ENCODE measurements at regions of chrX and their contacts with region 1.

Region 1: GRCh38 chrX:148310426-148311165 is 189.8 kb upstream of the AFF2 start:
- DNase-seq: peak in 8 of 9 donors; percentile 28 to 86 (median 76)
- ATAC-seq: peak; percentile 93
- H3K4me3 ChIP-seq: no peak overlapping the region
- H3K4me3 Mint-ChIP-seq: peak overlapping the region; percentile 48 to 83 (median 76)
- H3K27ac ChIP-seq: no peak overlapping the region
- H3K27ac Mint-ChIP-seq: peak overlapping the region; percentile 64 to 94 (median 85)
- H3K4me1 ChIP-seq: peaks cover 20 to 23% of the 10 kb centered on the region in 2 donors
- H3K4me1 Mint-ChIP-seq: peaks cover 18 to 51% (median 45%) of the 10 kb centered on the region in 7 donors
- H3K27me3 ChIP-seq: no peaks in the 10 kb centered on the region
- H3K27me3 Mint-ChIP-seq: no peaks in the 10 kb centered on the region

Region 2: DNA sequence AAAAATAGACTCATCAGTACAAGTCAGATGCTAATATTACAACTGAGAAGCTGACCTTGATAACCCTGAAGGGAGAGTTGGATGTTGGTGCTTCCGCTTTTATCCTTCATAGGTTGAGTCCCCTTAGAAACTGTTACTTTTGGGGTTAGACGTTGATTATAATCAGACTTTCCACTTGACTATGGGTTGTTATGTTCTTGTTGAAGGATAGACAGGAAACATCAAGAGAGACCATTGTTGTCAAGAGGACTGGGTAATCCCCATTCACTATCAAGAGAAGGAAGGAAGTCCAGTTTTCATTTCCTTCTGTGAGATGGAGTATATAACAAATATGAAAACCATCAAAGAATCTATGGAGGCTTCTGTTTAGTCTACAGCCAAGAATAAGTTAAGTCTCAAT is 40.1 kb before region 1 on chrX:
- CTCF ChIA-PET with region 1: no interaction called
- POLR2A ChIA-PET with region 1: no interaction called
- intact Hi-C with region 1: loop called (anchors 2 to 5 kb)
- DNase-seq: peak in 5 of 9 donors; percentile 2 to 40 (median 6)
- ATAC-seq: peak; percentile 57
- H3K4me3 ChIP-seq: no peak overlapping the region
- H3K4me3 Mint-ChIP-seq: peak overlapping the region in 4 of 10 donors; percentile 8 to 29 (median 18)
- H3K27ac ChIP-seq: no peak overlapping the region
- H3K27ac Mint-ChIP-seq: peak overlapping the region in 4 of 9 donors; percentile 9 to 55 (median 24)
- H3K4me1 ChIP-seq: peaks cover 0 to 8% of the 10 kb centered on the region in 2 donors
- H3K4me1 Mint-ChIP-seq: peaks cover 2 to 44% (median 28%) of the 10 kb centered on the region in 7 donors
- H3K27me3 ChIP-seq: no peaks in the 10 kb centered on the region
- H3K27me3 Mint-ChIP-seq: no peaks in the 10 kb centered on the region

Region 3: GRCh38 chrX:148333989-148334388 is 23.4 kb after region 1 on chrX:
- CTCF ChIA-PET with region 1: no interaction called
- POLR2A ChIA-PET with region 1: interaction called, 6 read pairs
- intact Hi-C with region 1: loop called in 1 of 2 experiments (anchors 1 kb)
- DNase-seq: peak in 7 of 9 donors; percentile 8 to 72 (median 47)
- ATAC-seq: peak; percentile 73
- H3K4me3 ChIP-seq: no peak overlapping the region
- H3K4me3 Mint-ChIP-seq: peak overlapping the region; percentile 18 to 81 (median 70)
- H3K27ac ChIP-seq: peak overlapping the region; percentile 58
- H3K27ac Mint-ChIP-seq: peak overlapping the region; percentile 85 to 98 (median 92)
- H3K4me1 ChIP-seq: peaks cover 11 to 45% of the 10 kb centered on the region in 2 donors
- H3K4me1 Mint-ChIP-seq: peaks cover 17 to 93% (median 74%) of the 10 kb centered on the region in 7 donors
- H3K27me3 ChIP-seq: no peaks in the 10 kb centered on the region
- H3K27me3 Mint-ChIP-seq: no peaks in the 10 kb centered on the region

Measured in naive thymus-derived CD4-positive, alpha-beta T cell (primary cell).